ENCODE measurements at regions of chr2 and their contacts with region 1.

Region 1: GRCh38 chr2:27409321-27410073 is at the start of gene PPM1G:
- DNase-seq: peak; percentile 94 to 97
- ATAC-seq: peak; percentile 99 to 100 (median 100)
- H3K4me3 ChIP-seq: peak within 1 kb of the TSS; percentile 69 to 100 (median 98)
- H3K27ac ChIP-seq: peak within 1 kb of the TSS; percentile 48 to 95 (median 92)
- H3K4me1 ChIP-seq: peaks cover 7 to 38% (median 28%) of the 10 kb centered on the region in 9 donors
- H3K27me3 ChIP-seq: no peaks in the 10 kb centered on the region
- CTCF ChIP-seq: peak in 2 of 9 donors; percentile 5 to 13
- total RNA-seq, gene PPM1G: 28.4 to 46.1 (median 33.0) TPM

Region 2: GRCh38 chr2:27249891-27250651 is 159.4 kb before region 1 on chr2:
- intact Hi-C with region 1: no loop called
- DNase-seq: peak; percentile 45 to 64
- ATAC-seq: peak; percentile 71 to 87 (median 79)
- H3K4me3 ChIP-seq: peak overlapping the region in 1 of 10 donors; percentile 10
- H3K27ac ChIP-seq: no peak overlapping the region
- H3K4me1 ChIP-seq: peaks cover 0 to 20% (median 9%) of the 10 kb centered on the region in 9 donors
- H3K27me3 ChIP-seq: peaks cover 0 to 43% (median 22%) of the 10 kb centered on the region in 7 donors
- CTCF ChIP-seq: peak; percentile 40 to 81 (median 75)

Region 3: GRCh38 chr2:27380626-27381545 is 28.6 kb before region 1 on chr2 and contains the start of gene ZNF513:
- intact Hi-C with region 1: loop called in 2 of 10 experiments (anchors 2 kb)
- DNase-seq: peak; percentile 97 to 98
- ATAC-seq: peak; percentile 88 to 96 (median 96)
- H3K4me3 ChIP-seq: peak within 1 kb of the TSS; percentile 29 to 72 (median 64)
- H3K27ac ChIP-seq: peak within 1 kb of the TSS; percentile 61 to 93 (median 88)
- H3K4me1 ChIP-seq: peaks cover 5 to 33% (median 17%) of the 10 kb centered on the region in 9 donors
- H3K27me3 ChIP-seq: no peaks in the 10 kb centered on the region
- CTCF ChIP-seq: no peak
- total RNA-seq, gene ZNF513: 4.5 to 11.5 (median 6.8) TPM

Region 4: GRCh38 chr2:27628767-27629709 is 219.5 kb after region 1 on chr2 and contains the starts of genes CCDC121 and GPN1:
- intact Hi-C with region 1: loop called in 1 of 10 experiments (anchors 10 kb)
- DNase-seq: peak; percentile 80 to 85
- ATAC-seq: peak; percentile 96 to 99 (median 98)
- H3K4me3 ChIP-seq: peak within 1 kb of the TSS; percentile 47 to 90 (median 76)
- H3K27ac ChIP-seq: peak within 1 kb of the TSS in 9 of 10 donors; percentile 49 to 91 (median 79)
- H3K4me1 ChIP-seq: peaks cover 4 to 43% (median 30%) of the 10 kb centered on the region in 9 donors
- H3K27me3 ChIP-seq: no peaks in the 10 kb centered on the region
- CTCF ChIP-seq: no peak
- total RNA-seq, gene CCDC121: 4.1 to 7.6 (median 6.0) TPM
- total RNA-seq, gene GPN1: 17.1 to 23.8 (median 19.7) TPM

Region 5: GRCh38 chr2:27771548-27772335 is 362.2 kb after region 1 on chr2 and contains the start of gene MRPL33:
- intact Hi-C with region 1: no loop called
- DNase-seq: peak; percentile 95
- ATAC-seq: peak; percentile 97 to 98 (median 98)
- H3K4me3 ChIP-seq: peak within 1 kb of the TSS; percentile 50 to 90 (median 73)
- H3K27ac ChIP-seq: peak within 1 kb of the TSS; percentile 62 to 96 (median 92)
- H3K4me1 ChIP-seq: peaks cover 5 to 51% (median 41%) of the 10 kb centered on the region in 9 donors
- H3K27me3 ChIP-seq: no peaks in the 10 kb centered on the region
- CTCF ChIP-seq: no peak
- total RNA-seq, gene MRPL33: 170 to 416 (median 253) TPM

Region 6: GRCh38 chr2:28709101-28709500 is 1299.6 kb after region 1 on chr2:
- intact Hi-C with region 1: no loop called
- DNase-seq: no peak
- ATAC-seq: no peak
- H3K4me3 ChIP-seq: no peak overlapping the region
- H3K27ac ChIP-seq: no peak overlapping the region
- H3K4me1 ChIP-seq: peaks cover 0 to 15% (median 5%) of the 10 kb centered on the region in 9 donors
- H3K27me3 ChIP-seq: no peaks in the 10 kb centered on the region
- CTCF ChIP-seq: no peak